Activated CD8-positive, alpha-beta T cell treated with anti-CD3 and anti-CD28 coated beads for 36 hours (primary cell): ENCODE measurements at regions of chr12 and their contacts with region 1.

Region 1: GRCh38 chr12:51238510-51239334 is at the start of gene DAZAP2:
- DNase-seq: peak; percentile 97
- ATAC-seq: peak; percentile 92
- H3K4me3 Mint-ChIP-seq: peak within 1 kb of the TSS; percentile 95
- H3K27ac Mint-ChIP-seq: peak within 1 kb of the TSS; percentile 100
- H3K4me1 Mint-ChIP-seq: peaks cover 31% of the 10 kb centered on the region
- H3K27me3 Mint-ChIP-seq: no peaks in the 10 kb centered on the region
- CTCF ChIP-seq: no peak
- total RNA-seq, gene DAZAP2: 91.7 to 98.3 TPM

Region 2: GRCh38 chr12:51090705-51091229 is 148.0 kb before region 1 on chr12:
- CTCF ChIA-PET with region 1: no interaction called
- POLR2A ChIA-PET with region 1: interaction called, 3 read pairs
- intact Hi-C with region 1: loop called (anchors 5 kb)
- DNase-seq: no peak
- ATAC-seq: no peak
- H3K4me3 Mint-ChIP-seq: no peak overlapping the region
- H3K27ac Mint-ChIP-seq: no peak overlapping the region
- H3K4me1 Mint-ChIP-seq: peaks cover 19% of the 10 kb centered on the region
- H3K27me3 Mint-ChIP-seq: no peaks in the 10 kb centered on the region
- CTCF ChIP-seq: no peak

Region 3: GRCh38 chr12:51217968-51218606 is 20.6 kb before region 1 on chr12 and contains the start of gene POU6F1:
- CTCF ChIA-PET with region 1: interaction called, 7 read pairs
- POLR2A ChIA-PET with region 1: interaction called, 24 read pairs
- intact Hi-C with region 1: no loop called
- DNase-seq: peak; percentile 66
- ATAC-seq: peak; percentile 82
- H3K4me3 Mint-ChIP-seq: peak within 1 kb of the TSS; percentile 84
- H3K27ac Mint-ChIP-seq: peak within 1 kb of the TSS; percentile 90
- H3K4me1 Mint-ChIP-seq: peaks cover 15% of the 10 kb centered on the region
- H3K27me3 Mint-ChIP-seq: no peaks in the 10 kb centered on the region
- CTCF ChIP-seq: peak; percentile 80
- total RNA-seq, gene POU6F1: 5.8 to 7.3 TPM

Region 4: GRCh38 chr12:51225771-51226170 is 13.0 kb before region 1 on chr12:
- CTCF ChIA-PET with region 1: interaction called, 7 read pairs
- POLR2A ChIA-PET with region 1: interaction called, 15 read pairs
- intact Hi-C with region 1: no loop called
- DNase-seq: no peak
- ATAC-seq: no peak
- H3K4me3 Mint-ChIP-seq: no peak overlapping the region
- H3K27ac Mint-ChIP-seq: no peak overlapping the region
- H3K4me1 Mint-ChIP-seq: no peaks in the 10 kb centered on the region
- H3K27me3 Mint-ChIP-seq: no peaks in the 10 kb centered on the region
- CTCF ChIP-seq: no peak

Region 5: DNA sequence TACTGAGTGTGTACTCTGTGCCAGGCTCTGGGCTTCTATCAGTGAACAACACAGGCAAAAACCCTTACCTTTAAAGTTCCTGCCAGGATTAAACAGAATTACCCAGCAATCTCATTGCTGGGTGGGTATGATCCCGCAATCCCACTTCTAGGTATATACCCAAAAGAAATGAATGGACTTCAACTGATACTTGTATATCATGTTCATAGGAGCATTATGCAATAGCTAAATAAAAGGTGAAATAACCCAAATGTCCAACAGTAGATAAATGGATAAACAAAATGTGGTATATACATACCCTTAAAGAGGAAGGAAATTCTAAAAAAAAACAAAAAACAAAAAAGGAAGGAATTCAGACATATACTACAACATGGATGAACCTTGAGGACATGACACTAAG is 14.6 kb after region 1 on chr12:
- CTCF ChIA-PET with region 1: interaction called, 15 read pairs
- POLR2A ChIA-PET with region 1: interaction called, 17 read pairs
- intact Hi-C with region 1: no loop called
- DNase-seq: no peak
- ATAC-seq: no peak
- H3K4me3 Mint-ChIP-seq: no peak overlapping the region
- H3K27ac Mint-ChIP-seq: no peak overlapping the region
- H3K4me1 Mint-ChIP-seq: peaks cover 2% of the 10 kb centered on the region
- H3K27me3 Mint-ChIP-seq: no peaks in the 10 kb centered on the region
- CTCF ChIP-seq: no peak